CD14-positive monocyte (primary cell): ENCODE measurements at regions of chr21 and their contacts with region 1.

Region 1: GRCh38 chr21:37878946-37879660 is 37.2 kb downstream of the KCNJ6 start:
- DNase-seq: peak; percentile 12 to 36 (median 13)
- H3K4me3 ChIP-seq: no peak overlapping the region
- H3K4me3 Mint-ChIP-seq: no peak overlapping the region
- H3K27ac ChIP-seq: no peak overlapping the region
- H3K27ac Mint-ChIP-seq: peak overlapping the region in 1 of 7 donors; percentile 13
- H3K4me1 ChIP-seq: no peaks in the 10 kb centered on the region
- H3K4me1 Mint-ChIP-seq: no peaks in the 10 kb centered on the region
- H3K27me3 ChIP-seq: no peaks in the 10 kb centered on the region
- H3K27me3 Mint-ChIP-seq: peaks cover 2 to 4% (median 2%) of the 10 kb centered on the region in 3 donors
- CTCF ChIP-seq: no peak

Region 2: GRCh38 chr21:37821786-37822450 is 57.2 kb before region 1 on chr21:
- intact Hi-C with region 1: no loop called
- DNase-seq: no peak
- H3K4me3 ChIP-seq: no peak overlapping the region
- H3K4me3 Mint-ChIP-seq: no peak overlapping the region
- H3K27ac ChIP-seq: no peak overlapping the region
- H3K27ac Mint-ChIP-seq: peak overlapping the region in 1 of 7 donors; percentile 4
- H3K4me1 ChIP-seq: peaks cover 28 to 36% of the 10 kb centered on the region in 2 donors
- H3K4me1 Mint-ChIP-seq: peaks cover 36% of the 10 kb centered on the region
- H3K27me3 ChIP-seq: no peaks in the 10 kb centered on the region
- H3K27me3 Mint-ChIP-seq: peaks cover 0 to 4% (median 0%) of the 10 kb centered on the region in 3 donors
- CTCF ChIP-seq: no peak

Region 3: GRCh38 chr21:37849506-37850102 is 29.5 kb before region 1 on chr21:
- intact Hi-C with region 1: loop called in 1 of 2 experiments (anchors 5 kb)
- DNase-seq: peak in 2 of 3 donors; percentile 41 to 53
- H3K4me3 ChIP-seq: no peak overlapping the region
- H3K4me3 Mint-ChIP-seq: no peak overlapping the region
- H3K27ac ChIP-seq: no peak overlapping the region
- H3K27ac Mint-ChIP-seq: no peak overlapping the region
- H3K4me1 ChIP-seq: no peaks in the 10 kb centered on the region
- H3K4me1 Mint-ChIP-seq: peaks cover 5% of the 10 kb centered on the region
- H3K27me3 ChIP-seq: no peaks in the 10 kb centered on the region
- H3K27me3 Mint-ChIP-seq: peaks cover 0 to 6% (median 2%) of the 10 kb centered on the region in 3 donors
- CTCF ChIP-seq: no peak